ENCODE measurements at regions of chr18 and their contacts with region 1.

Region 1: GRCh38 chr18:12092398-12093229 is 1.0 kb upstream of the ANKRD62 start:
- DNase-seq: peak; percentile 68 to 70
- H3K4me3 ChIP-seq: no peak overlapping the region
- H3K4me3 Mint-ChIP-seq: no peak overlapping the region
- H3K27ac Mint-ChIP-seq: no peak overlapping the region
- H3K4me1 ChIP-seq: no peaks in the 10 kb centered on the region
- H3K4me1 Mint-ChIP-seq: no peaks in the 10 kb centered on the region
- H3K27me3 ChIP-seq: no peaks in the 10 kb centered on the region
- H3K27me3 Mint-ChIP-seq: peaks cover 3% of the 10 kb centered on the region
- CTCF ChIP-seq: peak; percentile 68 to 84

Region 2: GRCh38 chr18:12121175-12122042 is 28.8 kb after region 1 on chr18:
- CTCF ChIA-PET with region 1: no interaction called
- POLR2A ChIA-PET with region 1: no interaction called
- intact Hi-C with region 1: loop called (anchors 1 kb)
- DNase-seq: peak in 1 of 2 experiments; percentile 43
- H3K4me3 ChIP-seq: no peak overlapping the region
- H3K4me3 Mint-ChIP-seq: peak overlapping the region; percentile 66
- H3K27ac Mint-ChIP-seq: peak overlapping the region; percentile 15
- H3K4me1 ChIP-seq: no peaks in the 10 kb centered on the region
- H3K4me1 Mint-ChIP-seq: peaks cover 11% of the 10 kb centered on the region
- H3K27me3 ChIP-seq: no peaks in the 10 kb centered on the region
- H3K27me3 Mint-ChIP-seq: peaks cover 22% of the 10 kb centered on the region
- CTCF ChIP-seq: peak; percentile 46 to 65